OCI-LY7 (cell line): ENCODE measurements at regions of chr17 and their contacts with region 1.

Region 1: DNA sequence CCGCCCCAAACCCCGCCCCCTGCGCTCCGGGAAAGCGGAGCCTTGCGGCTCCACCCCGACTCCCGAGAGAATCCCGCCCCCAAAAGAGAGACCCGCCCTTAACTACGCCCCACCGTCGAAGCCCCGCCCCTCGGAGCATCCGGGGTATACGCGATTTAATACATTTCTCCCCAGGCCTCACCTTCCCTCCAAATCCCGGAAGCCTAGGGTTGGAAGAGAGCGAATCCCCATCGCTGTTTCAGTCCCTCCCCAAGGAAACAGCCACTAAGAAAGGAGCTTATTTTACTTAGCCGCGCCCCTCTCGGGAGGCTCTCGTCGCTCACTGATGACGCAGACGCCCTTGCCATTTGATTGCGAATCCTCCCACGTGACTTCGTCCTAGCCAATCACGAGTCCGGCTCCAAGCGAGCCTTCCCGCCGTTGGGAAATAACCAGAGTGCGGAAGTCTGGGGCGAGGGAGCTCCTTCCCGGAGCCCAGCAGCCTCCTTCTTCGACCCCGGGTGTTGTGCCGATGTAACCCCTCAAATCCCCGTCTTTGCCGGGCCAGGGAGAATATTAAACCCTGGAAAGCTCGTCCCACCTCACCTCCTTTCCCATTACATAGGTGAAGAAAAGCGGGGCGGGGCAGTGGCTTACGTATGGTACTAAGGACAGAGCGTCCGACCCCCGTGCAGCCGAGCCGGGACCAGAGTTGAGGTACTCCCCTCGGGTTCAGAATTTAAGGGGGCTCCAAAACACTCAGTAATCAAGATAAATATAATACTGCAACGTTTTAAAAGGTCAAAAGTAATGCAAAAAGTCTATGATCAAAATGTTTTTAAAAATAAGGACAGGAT is 462 bp upstream of the FDXR start:
- DNase-seq: peak; percentile 100
- H3K4me3 ChIP-seq: peak overlapping the region; percentile 78
- H3K27ac ChIP-seq: peak overlapping the region; percentile 53
- H3K4me1 ChIP-seq: peaks cover 24% of the 10 kb centered on the region
- CTCF ChIP-seq: no peak

Region 2: GRCh38 chr17:74784125-74784810 is 89.0 kb before region 1 on chr17:
- CTCF ChIA-PET with region 1: no interaction called
- POLR2A ChIA-PET with region 1: interaction called, 13 read pairs
- intact Hi-C with region 1: no loop called
- DNase-seq: peak; percentile 58
- H3K4me3 ChIP-seq: peak overlapping the region; percentile 33
- H3K27ac ChIP-seq: peak overlapping the region; percentile 30
- H3K4me1 ChIP-seq: peaks cover 44% of the 10 kb centered on the region
- CTCF ChIP-seq: no peak

Region 3: DNA sequence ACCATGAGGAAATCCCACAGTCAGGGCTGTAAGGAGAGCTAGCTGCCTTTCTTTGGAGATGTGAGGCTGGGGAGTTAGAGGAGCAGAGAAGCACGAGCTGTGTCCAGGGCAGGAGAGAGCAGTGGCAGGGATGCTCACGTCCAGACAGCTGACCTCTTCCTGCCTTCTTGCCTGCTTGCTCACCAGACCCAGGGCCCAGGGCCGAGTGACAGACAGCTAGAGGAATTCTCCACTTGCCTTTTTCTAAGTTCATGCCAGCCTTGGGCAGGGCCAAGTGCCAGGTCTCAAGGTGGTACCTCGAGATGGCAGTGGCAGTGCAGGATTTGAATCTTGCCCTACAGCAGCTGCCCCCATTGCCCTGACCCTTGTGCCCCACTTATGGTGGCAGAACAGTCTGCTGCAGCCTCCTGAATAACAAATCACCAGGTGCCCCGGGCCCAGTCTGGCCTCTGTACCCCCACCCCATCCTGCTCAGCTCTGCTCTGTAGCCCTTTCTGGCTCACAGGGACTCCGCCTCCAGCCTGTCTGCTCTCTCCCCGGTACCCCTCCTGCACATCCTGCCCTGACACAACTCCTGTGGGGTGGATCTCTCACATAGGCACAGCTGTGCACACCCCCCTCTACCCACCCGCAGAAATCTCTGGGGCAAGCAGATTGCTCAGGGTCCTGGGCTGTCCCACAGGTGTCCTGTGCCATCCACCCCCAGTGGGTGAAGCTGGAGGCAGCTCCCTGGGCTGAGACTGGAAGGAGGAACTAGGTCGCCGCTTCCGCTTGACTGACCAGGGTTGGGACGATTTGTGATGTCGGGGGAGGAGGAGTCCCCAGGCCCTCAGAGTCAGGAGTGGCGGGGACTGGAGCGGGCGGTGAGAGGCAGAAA is 39.5 kb before region 1 on chr17:
- CTCF ChIA-PET with region 1: interaction called, 3 read pairs
- POLR2A ChIA-PET with region 1: interaction called, 4 read pairs
- intact Hi-C with region 1: loop called (anchors 1 kb)
- DNase-seq: peak; percentile 82
- H3K4me3 ChIP-seq: peak overlapping the region; percentile 35
- H3K27ac ChIP-seq: peak overlapping the region; percentile 60
- H3K4me1 ChIP-seq: peaks cover 40% of the 10 kb centered on the region
- CTCF ChIP-seq: no peak